G401 (cell line): ENCODE measurements at regions of chr10 and their contacts with region 1.

Region 1: DNA sequence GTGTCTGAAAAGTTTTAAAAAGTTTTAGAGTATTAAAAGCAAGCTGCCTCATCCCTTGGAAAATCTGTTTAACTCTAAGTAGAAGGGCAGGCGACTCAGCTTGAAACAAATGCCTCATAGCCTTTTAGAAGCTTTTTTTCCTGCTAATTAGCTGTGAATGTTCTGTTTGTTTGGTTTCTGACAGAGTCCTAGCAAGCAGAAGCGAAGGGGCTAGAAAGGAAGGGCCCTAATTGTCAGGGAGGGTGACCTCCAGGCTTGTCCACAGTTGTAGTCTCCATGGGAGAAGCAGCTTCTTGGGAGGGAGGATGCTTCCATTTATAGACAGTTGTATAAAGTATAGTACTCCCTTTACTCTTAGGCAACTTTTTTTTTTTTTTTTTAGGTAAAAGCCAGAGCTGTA is 90.9 kb downstream of the DNAJC1 start:
- DNase-seq: no peak

Region 2: DNA sequence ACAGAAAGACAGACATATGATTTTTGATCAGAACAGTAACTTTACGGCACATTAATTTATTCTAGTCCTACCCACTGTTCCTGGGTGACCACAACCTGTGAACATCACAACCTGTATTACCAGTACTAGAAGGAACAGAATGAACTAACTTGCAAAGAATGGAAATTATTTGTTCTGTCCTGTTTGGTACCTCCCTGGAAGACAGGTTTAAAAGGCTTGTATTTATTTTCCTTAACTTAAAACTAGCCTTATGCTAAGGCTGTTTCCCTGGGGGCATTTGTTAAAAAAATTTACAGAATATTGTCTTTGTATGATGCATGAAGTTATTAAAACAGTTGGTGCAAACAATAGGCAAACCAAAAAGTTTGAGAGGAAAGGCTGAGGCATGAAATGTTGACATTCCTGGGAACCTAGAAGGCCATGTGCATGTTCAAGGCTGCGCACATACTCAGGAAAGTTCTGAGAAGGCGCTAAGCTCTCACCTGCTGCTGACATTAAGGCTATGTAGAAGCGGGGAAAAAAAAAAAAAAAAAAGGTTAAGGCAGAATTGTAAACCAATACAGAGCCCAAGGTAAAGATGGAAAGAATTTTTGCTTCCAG is 41.7 kb before region 1 on chr10:
- in situ Hi-C with region 1: loop called (anchors 5 kb)
- DNase-seq: no peak